Left ventricle myocardium inferior (tissue), 1 donor: ENCODE measurements at regions of chr1 and their contacts with region 1.

Region 1: GRCh38 chr1:207404849-207405525 is 49.1 kb upstream of the CR2 start:
- DNase-seq: no peak
- H3K4me3 ChIP-seq: no peak overlapping the region
- H3K27ac ChIP-seq: no peak overlapping the region
- H3K4me1 ChIP-seq: no peaks in the 10 kb centered on the region
- H3K27me3 ChIP-seq: peaks cover 15% of the 10 kb centered on the region
- CTCF ChIP-seq: peak; percentile 87

Region 2: GRCh38 chr1:207084701-207085180 is 320.2 kb before region 1 on chr1:
- intact Hi-C with region 1: loop called (anchors 5 kb)
- DNase-seq: no peak
- H3K4me3 ChIP-seq: no peak overlapping the region
- H3K27ac ChIP-seq: no peak overlapping the region
- H3K4me1 ChIP-seq: peaks cover 13% of the 10 kb centered on the region
- H3K27me3 ChIP-seq: no peaks in the 10 kb centered on the region
- CTCF ChIP-seq: peak; percentile 75

Region 3: GRCh38 chr1:207172885-207173284 is 232.1 kb before region 1 on chr1:
- intact Hi-C with region 1: loop called (anchors 10 kb)
- DNase-seq: no peak
- H3K4me3 ChIP-seq: no peak overlapping the region
- H3K27ac ChIP-seq: no peak overlapping the region
- H3K4me1 ChIP-seq: no peaks in the 10 kb centered on the region
- H3K27me3 ChIP-seq: no peaks in the 10 kb centered on the region
- CTCF ChIP-seq: no peak